ENCODE measurements at regions of chr6 and their contacts with region 1.

Region 1: GRCh38 chr6:41683510-41684310 is 45.4 kb downstream of the MDFI start:
- DNase-seq: peak; percentile 88 to 95
- ATAC-seq: peak; percentile 91
- H3K4me3 ChIP-seq: no peak overlapping the region
- H3K27ac ChIP-seq: no peak overlapping the region
- H3K4me1 ChIP-seq: no peaks in the 10 kb centered on the region
- H3K27me3 ChIP-seq: no peaks in the 10 kb centered on the region

Region 2: GRCh38 chr6:41367700-41368099 is 316.0 kb before region 1 on chr6:
- intact Hi-C with region 1: loop called (anchors 2 kb)
- DNase-seq: no peak
- ATAC-seq: peak; percentile 64
- H3K4me3 ChIP-seq: no peak overlapping the region
- H3K27ac ChIP-seq: no peak overlapping the region
- H3K4me1 ChIP-seq: no peaks in the 10 kb centered on the region
- H3K27me3 ChIP-seq: no peaks in the 10 kb centered on the region

Region 3: DNA sequence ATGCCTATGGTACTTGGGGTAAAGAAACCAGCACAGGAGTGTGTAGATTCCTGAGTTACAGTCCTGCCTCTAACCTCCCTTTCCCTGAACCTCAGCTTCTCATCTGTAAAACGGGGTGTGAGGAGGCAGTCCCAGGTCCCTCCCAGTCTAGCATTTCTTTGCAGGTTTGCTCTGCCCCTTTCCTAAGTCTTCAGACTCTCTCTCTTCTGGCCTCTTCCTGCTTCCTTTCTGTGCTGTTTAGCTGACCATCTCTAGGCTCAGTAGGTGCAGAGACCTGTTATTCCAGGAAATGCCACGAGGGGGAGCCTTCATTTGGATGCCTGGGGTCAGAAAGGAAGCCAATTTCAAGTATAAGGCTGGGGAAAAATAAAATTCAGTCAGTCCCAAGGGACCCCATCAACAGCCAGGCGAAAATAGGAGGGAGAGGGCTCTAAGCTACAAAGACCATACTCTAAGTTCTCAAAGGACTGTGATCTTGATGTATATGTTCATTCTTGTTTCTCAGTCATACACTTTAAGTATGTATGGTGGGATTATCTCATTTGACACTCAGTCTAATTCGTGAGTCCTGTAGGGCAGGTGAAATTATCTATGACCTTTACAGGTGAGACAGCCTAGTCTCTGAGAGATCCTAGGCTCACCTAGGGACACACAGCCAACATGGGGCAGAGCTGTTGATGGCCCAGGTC is 259.2 kb before region 1 on chr6:
- intact Hi-C with region 1: loop called (anchors 5 to 10 kb)
- DNase-seq: peak; percentile 86 to 90
- ATAC-seq: peak; percentile 45
- H3K4me3 ChIP-seq: no peak overlapping the region
- H3K27ac ChIP-seq: no peak overlapping the region
- H3K4me1 ChIP-seq: no peaks in the 10 kb centered on the region
- H3K27me3 ChIP-seq: no peaks in the 10 kb centered on the region

Region 4: DNA sequence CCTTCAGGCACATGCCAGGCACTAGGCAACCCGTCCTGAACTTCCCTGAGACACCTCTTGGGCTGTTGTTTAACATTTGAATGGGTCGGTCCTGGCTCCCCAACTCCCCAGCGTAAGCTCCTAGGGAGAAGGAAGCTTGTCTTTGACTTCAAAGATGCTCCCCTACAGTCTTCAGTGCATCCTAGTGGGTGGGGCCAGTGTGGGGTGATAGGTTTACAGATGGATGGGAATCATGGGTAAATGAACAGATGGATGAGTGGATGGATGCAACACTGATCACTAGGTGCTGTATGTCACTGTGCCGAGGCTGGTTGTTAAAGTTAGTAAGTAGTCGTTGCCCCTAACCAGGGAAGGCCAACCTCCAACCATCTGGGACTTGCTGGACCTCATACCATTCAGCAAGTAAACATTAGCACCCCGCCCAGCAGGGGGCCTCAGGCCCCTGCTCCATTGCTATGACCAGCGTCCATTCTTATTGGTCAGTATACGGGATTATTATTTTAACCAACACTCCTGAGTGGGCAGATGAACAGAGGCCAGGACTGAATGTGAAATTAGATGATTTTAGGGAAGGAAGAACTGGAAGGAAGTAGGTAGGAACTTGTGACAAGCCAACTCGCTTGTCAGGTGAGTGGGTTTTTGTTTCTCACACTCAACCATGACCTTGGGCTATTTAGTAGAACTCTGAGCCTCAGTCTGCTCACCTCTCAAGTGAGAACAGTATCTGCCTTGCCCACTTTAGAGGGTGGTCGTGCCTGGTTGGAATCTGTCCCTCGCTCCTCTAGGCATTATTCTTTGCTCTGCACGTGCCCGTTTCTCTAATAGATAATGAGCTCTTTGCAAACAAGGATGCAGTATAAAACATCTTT is 220.4 kb before region 1 on chr6:
- intact Hi-C with region 1: loop called in 1 of 2 experiments (anchors 5 kb)
- DNase-seq: peak; percentile 79 to 91
- ATAC-seq: peak; percentile 80
- H3K4me3 ChIP-seq: no peak overlapping the region
- H3K27ac ChIP-seq: no peak overlapping the region
- H3K4me1 ChIP-seq: no peaks in the 10 kb centered on the region
- H3K27me3 ChIP-seq: no peaks in the 10 kb centered on the region

Region 5: DNA sequence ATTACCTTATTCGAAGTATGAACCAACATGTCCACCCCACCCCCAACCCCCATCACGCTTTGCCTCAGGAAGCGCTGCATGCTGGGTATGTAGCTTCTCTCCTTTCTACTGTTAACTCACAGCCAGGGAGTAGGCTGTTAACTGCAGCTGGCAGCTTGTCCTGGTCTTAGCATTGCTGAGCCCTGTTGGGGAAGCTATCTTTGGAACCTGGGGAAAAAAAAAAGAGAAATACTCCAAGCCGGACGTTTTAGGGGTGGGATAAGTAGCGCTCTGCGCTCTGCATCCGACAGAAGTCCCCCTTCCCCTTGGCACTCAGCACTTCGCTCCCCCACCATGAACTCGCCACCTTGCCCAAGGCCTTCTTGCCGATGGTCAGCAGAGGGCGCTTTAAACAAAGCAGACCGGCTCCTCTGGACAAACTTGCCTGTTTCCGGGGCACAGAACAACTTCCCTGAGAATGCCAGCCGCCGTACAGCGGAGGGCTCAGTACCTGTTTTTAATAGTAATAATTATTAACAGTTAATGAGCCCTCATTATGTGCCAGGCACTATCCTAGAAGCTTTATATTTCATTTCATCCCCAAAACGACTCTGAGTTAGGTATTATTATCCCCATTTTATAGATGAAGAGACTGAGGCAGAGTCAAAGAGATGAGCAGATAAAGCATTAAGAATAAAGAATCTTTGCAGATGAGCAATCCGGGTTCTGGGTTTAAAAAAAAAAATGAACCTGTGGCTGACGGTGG is 80.7 kb before region 1 on chr6:
- intact Hi-C with region 1: loop called (anchors 1 to 2 kb)
- DNase-seq: peak; percentile 83 to 88
- ATAC-seq: peak; percentile 81
- H3K4me3 ChIP-seq: no peak overlapping the region
- H3K27ac ChIP-seq: no peak overlapping the region
- H3K4me1 ChIP-seq: no peaks in the 10 kb centered on the region
- H3K27me3 ChIP-seq: no peaks in the 10 kb centered on the region

Measured in aorta (tissue), 5 donors.